Left cardiac atrium (tissue), 4 donors: ENCODE measurements at regions of chr6 and their contacts with region 1.

Region 1: GRCh38 chr6:32868257-32868788 is 14.3 kb downstream of the PSMB9 start:
- DNase-seq: peak; percentile 85
- ATAC-seq: peak; percentile 78 to 83

Region 2: GRCh38 chr6:32413427-32414047 is 454.8 kb before region 1 on chr6:
- intact Hi-C with region 1: loop called in 1 of 2 experiments (anchors 5 kb)
- DNase-seq: peak; percentile 75
- ATAC-seq: peak; percentile 84

Region 3: GRCh38 chr6:32825966-32826365 is 42.4 kb before region 1 on chr6:
- intact Hi-C with region 1: loop called in 1 of 2 experiments (anchors 5 kb)
- DNase-seq: no peak
- ATAC-seq: peak; percentile 75 to 76

Region 4: DNA sequence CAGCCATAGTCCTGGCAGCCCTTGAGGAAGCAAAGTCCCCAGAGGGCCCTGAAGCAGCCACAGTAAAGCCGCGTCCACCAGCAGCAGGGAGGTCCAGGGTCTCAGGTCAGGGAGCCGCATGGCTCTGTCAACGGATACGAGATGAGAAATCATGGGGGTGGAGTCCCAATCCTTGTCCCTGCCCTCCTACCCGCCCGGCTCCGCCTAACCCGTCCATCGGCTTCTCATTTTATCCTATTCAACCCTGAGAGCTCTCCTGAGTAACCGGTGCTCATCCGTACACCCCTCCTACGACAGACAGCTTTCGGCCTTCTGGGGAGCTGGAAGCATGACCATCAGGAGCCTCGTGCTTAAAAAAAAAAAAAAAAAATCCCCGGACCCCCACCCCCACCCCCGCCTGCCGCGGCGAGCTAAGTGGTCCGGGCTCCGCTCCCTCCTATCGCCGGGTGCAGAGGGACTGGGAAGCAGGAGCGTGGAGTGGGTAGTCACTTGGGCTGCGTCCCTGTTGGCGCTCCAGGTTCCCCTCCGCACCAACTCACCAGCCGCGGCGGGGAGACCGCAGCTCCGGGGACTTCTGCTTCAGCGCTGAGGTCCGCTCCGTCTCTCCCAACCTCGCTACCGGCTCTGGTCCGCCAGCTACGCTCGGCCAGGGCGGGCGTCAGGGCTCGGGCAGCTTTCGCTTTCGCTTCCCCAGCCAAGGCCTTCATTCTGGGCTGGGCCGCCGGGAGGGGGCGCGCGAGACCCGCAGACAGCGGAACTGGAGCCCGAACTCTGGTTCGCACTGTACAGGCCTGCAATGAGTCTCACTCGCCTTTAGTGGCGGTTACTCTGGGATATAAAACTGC is 30.0 kb before region 1 on chr6 and contains the start of gene TAP2:
- intact Hi-C with region 1: loop called in 1 of 2 experiments (anchors 1 kb)
- DNase-seq: peak; percentile 96
- ATAC-seq: peak; percentile 96
- total RNA-seq, gene TAP2: 19.4 to 30.7 TPM

Region 5: DNA sequence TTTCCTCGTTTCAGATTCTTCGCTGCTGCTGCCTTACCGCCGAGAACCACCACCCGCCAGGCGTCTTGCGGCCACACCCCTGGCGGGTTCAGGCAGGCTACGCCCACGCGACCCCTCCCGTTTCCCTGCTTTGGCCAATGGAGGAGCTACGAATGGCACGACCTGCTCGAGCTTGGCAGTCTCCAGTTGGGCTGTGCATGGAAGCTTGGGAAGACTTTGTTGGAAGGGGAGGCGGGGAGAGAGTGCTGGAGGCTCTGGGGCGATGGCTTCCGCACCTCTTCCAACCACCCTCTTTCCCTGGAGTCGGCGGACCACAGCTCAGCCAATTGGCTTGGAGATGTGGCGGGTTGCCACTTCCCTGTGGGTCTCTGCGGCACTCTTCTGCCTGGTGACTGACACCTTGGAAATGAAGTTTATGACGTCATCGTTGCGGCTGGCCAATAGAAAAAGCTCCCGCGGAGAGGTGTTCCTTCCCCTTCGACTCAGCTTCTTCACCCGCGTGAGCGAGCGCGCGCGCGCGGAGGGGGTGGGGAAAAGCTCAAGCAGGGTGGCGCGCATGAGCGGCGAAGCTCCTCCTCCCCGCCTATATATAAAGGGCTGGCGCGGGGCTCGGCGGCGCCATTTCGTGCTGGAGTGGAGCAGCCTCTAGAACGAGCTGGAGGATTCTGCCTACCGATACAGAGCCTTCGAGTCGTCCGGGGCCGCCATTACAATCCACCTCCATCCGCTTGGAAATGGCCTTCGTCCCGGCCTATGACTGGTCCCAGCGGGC is 103.4 kb after region 1 on chr6:
- intact Hi-C with region 1: no loop called
- DNase-seq: peak; percentile 99
- ATAC-seq: peak; percentile 55 to 58